ENCODE measurements at regions of chr6 and their contacts with region 1.

Region 1: GRCh38 chr6:24494821-24495795 is at the start of gene ALDH5A1:
- DNase-seq: peak; percentile 85
- H3K4me3 Mint-ChIP-seq: peak within 1 kb of the TSS; percentile 84
- H3K27ac Mint-ChIP-seq: no peak within 1 kb of the TSS
- H3K4me1 Mint-ChIP-seq: peaks cover 12% of the 10 kb centered on the region
- H3K27me3 Mint-ChIP-seq: no peaks in the 10 kb centered on the region
- CTCF ChIP-seq: peak; percentile 16
- total RNA-seq, gene ALDH5A1: 22.2 and 23.2 TPM in 2 replicates

Region 2: GRCh38 chr6:24484657-24485323 is 10.3 kb before region 1 on chr6:
- CTCF ChIA-PET with region 1: interaction called, 4 read pairs
- intact Hi-C with region 1: loop called (anchors 1 kb)
- DNase-seq: no peak
- H3K4me3 Mint-ChIP-seq: no peak overlapping the region
- H3K27ac Mint-ChIP-seq: no peak overlapping the region
- H3K4me1 Mint-ChIP-seq: peaks cover 6% of the 10 kb centered on the region
- H3K27me3 Mint-ChIP-seq: no peaks in the 10 kb centered on the region
- CTCF ChIP-seq: no peak

Region 3: GRCh38 chr6:24752917-24753490 is 257.9 kb after region 1 on chr6:
- CTCF ChIA-PET with region 1: no interaction called
- intact Hi-C with region 1: no loop called
- DNase-seq: peak; percentile 31
- H3K4me3 Mint-ChIP-seq: no peak overlapping the region
- H3K27ac Mint-ChIP-seq: peak overlapping the region; percentile 0
- H3K4me1 Mint-ChIP-seq: peaks cover 20% of the 10 kb centered on the region
- H3K27me3 Mint-ChIP-seq: no peaks in the 10 kb centered on the region
- CTCF ChIP-seq: no peak